Transverse colon (tissue), 4 donors: ENCODE measurements at regions of chr13 and their contacts with region 1.

Region 1: DNA sequence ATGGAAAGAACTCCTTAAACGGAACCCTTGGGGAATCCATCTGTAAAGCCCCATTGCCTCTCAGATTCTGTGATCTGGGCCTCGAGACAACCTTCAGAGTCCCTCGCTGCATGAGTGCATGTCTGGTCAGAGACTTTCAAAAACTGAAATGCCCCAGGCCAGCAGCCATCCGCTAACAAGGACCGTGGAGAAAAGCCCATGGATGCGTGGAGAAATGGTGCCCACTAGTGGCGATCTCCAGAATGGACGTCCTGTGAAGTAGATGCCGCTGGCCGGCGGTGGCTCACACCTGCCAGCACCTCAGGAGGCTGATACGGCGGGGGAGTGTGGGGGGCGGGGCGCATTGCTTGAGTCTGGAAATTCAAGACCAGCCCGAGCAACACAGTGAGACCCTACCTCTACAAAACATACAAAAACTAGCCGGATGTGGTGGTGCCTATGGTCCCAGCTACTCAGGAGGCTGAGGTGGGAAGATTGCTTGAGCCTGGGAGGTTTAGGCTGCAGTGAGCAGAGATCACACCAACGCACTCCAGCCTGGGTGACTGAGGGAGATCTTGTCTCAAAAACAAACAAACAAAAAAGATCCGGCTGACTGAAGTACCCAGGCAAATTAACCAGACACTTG is 7.9 kb upstream of the CDC16 start:
- DNase-seq: peak; percentile 91
- H3K4me3 ChIP-seq: no peak overlapping the region
- H3K27ac ChIP-seq: no peak overlapping the region
- H3K4me1 ChIP-seq: peaks cover 0 to 8% (median 0%) of the 10 kb centered on the region in 4 donors
- H3K27me3 ChIP-seq: peaks cover 27% of the 10 kb centered on the region
- CTCF ChIP-seq: peak; percentile 96 to 98 (median 97)
- EP300 ChIP-seq: no peak
- POLR2A ChIP-seq: no peak

Region 2: GRCh38 chr13:113337556-113337955 is 889.3 kb before region 1 on chr13:
- in situ Hi-C with region 1: no loop called
- intact Hi-C with region 1: no loop called
- DNase-seq: no peak
- H3K4me3 ChIP-seq: no peak overlapping the region
- H3K27ac ChIP-seq: no peak overlapping the region
- H3K4me1 ChIP-seq: no peaks in the 10 kb centered on the region
- H3K27me3 ChIP-seq: no peaks in the 10 kb centered on the region
- CTCF ChIP-seq: no peak
- EP300 ChIP-seq: no peak
- POLR2A ChIP-seq: no peak

Region 3: GRCh38 chr13:113951246-113951999 is 275.4 kb before region 1 on chr13:
- in situ Hi-C with region 1: no loop called
- intact Hi-C with region 1: loop called (anchors 2 kb)
- DNase-seq: peak; percentile 91
- H3K4me3 ChIP-seq: no peak overlapping the region
- H3K27ac ChIP-seq: no peak overlapping the region
- H3K4me1 ChIP-seq: peaks cover 0 to 11% (median 6%) of the 10 kb centered on the region in 4 donors
- H3K27me3 ChIP-seq: no peaks in the 10 kb centered on the region
- CTCF ChIP-seq: peak; percentile 80 to 94 (median 86)
- EP300 ChIP-seq: no peak
- POLR2A ChIP-seq: no peak

Region 4: DNA sequence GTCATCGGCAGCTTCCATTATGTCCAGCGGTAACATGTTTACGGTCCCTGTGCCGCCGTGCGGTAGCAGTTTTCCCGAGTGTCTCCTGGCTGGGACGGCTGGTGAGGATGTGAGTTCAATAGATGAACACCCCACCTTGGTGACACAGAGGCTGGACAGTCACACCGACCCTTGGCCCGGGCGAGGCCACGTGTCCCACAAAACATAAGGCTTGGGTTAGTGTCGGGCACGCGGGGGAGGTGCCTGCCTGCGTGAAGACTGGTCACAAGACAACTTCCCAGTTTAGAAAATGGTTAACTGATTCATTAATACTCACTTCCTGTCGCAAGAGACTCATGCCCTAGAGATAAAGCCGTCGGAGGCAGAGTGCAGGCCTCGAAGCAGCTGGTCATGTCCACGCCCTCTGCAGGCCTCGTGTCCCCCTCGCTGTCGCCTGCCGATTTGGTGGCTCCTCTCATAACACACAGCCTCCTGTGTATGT is 111.6 kb before region 1 on chr13:
- in situ Hi-C with region 1: no loop called
- intact Hi-C with region 1: no loop called
- DNase-seq: peak; percentile 81
- H3K4me3 ChIP-seq: no peak overlapping the region
- H3K27ac ChIP-seq: peak overlapping the region; percentile 47 to 70 (median 63)
- H3K4me1 ChIP-seq: peaks cover 21 to 48% (median 40%) of the 10 kb centered on the region in 4 donors
- H3K27me3 ChIP-seq: no peaks in the 10 kb centered on the region
- CTCF ChIP-seq: peak in 1 of 5 experiments; percentile 20
- EP300 ChIP-seq: no peak
- POLR2A ChIP-seq: no peak